Astrocyte of the cerebellum (primary cell): ENCODE measurements at regions of chr2 and their contacts with region 1.

Region 1: DNA sequence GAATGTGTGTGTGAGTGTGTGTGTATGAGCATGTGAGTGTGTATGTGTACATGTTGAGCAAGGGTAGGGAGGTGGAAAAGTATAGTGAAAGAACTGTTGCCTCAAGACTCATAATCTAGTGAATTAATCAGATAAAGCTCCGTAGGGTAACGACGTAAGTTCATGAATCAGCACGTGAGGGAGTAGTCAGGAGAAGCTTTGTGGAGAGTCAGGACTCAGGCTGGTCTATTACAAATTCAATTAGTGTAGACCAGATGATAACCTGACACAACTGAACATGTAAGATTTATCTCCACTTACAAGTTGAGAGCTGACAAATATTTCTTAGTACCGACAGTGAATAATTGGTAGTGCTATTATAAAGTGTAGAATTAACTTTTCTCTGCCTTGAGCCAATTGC is 194.5 kb downstream of the RAD51AP2 start:
- DNase-seq: no peak
- H3K4me3 ChIP-seq: no peak overlapping the region
- CTCF ChIP-seq: no peak

Region 2: GRCh38 chr2:17355608-17356329 is 32.1 kb after region 1 on chr2:
- in situ Hi-C with region 1: loop called (anchors 5 kb)
- DNase-seq: no peak
- H3K4me3 ChIP-seq: no peak overlapping the region
- CTCF ChIP-seq: no peak